HCT116 (cell line): ENCODE measurements at regions of chrX and their contacts with region 1.

Region 1: DNA sequence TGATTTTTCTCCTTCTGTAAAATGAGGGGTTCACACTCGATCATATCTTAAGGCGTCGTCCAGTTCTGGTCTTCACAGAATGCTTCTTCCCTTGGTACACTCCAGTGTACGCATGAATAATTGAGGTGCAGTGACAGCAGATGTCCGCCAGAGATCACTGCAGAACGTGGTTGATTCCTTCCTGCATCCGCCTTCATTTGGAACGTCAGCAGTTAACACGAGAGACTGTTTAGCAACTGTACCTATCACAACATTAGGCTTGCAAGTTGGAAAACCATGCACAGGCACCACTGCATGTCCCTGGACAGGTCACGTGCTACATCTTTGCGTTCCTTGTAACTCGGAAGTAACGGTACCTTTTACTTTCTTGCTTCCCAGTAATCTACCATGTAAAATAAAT is 66.0 kb upstream of the GEMIN8 start:
- DNase-seq: peak; percentile 57
- ATAC-seq: peak; percentile 97
- H3K4me3 ChIP-seq: no peak overlapping the region
- H3K27ac ChIP-seq: no peak overlapping the region
- H3K4me1 ChIP-seq: no peaks in the 10 kb centered on the region
- H3K27me3 ChIP-seq: no peaks in the 10 kb centered on the region
- CTCF ChIP-seq: peak; percentile 37 to 67 (median 60); a peak in 4 of 6 replicates
- POLR2A ChIP-seq: no peak
- RAD21 ChIP-seq: peak; percentile 82

Region 2: DNA sequence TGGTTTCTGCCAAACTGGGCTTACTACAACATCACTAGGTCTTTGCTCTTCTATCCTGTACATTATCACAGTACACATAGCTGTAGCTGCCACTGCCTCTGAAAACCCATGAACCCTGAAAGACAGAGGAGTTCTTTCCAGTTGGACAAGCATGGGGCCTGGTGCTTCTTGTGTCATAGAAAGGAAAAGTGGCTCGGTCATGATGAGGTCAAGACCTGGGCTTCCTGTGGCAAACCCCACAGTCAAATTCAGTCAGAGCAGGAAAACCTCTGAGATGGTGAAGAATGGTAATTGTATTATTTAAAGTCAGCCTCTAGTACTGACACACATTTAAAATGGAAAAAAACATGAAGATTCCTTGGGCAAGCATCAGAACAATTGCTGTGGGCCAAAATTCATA is 1437.8 kb before region 1 on chrX:
- CTCF ChIA-PET with region 1: no interaction called
- POLR2A ChIA-PET with region 1: no interaction called
- RAD21 ChIA-PET with region 1: no interaction called
- intact Hi-C with region 1: no loop called
- DNase-seq: no peak
- ATAC-seq: no peak
- H3K4me3 ChIP-seq: no peak overlapping the region
- H3K27ac ChIP-seq: no peak overlapping the region
- H3K4me1 ChIP-seq: no peaks in the 10 kb centered on the region
- H3K27me3 ChIP-seq: no peaks in the 10 kb centered on the region
- CTCF ChIP-seq: no peak
- POLR2A ChIP-seq: no peak
- RAD21 ChIP-seq: no peak

Region 3: DNA sequence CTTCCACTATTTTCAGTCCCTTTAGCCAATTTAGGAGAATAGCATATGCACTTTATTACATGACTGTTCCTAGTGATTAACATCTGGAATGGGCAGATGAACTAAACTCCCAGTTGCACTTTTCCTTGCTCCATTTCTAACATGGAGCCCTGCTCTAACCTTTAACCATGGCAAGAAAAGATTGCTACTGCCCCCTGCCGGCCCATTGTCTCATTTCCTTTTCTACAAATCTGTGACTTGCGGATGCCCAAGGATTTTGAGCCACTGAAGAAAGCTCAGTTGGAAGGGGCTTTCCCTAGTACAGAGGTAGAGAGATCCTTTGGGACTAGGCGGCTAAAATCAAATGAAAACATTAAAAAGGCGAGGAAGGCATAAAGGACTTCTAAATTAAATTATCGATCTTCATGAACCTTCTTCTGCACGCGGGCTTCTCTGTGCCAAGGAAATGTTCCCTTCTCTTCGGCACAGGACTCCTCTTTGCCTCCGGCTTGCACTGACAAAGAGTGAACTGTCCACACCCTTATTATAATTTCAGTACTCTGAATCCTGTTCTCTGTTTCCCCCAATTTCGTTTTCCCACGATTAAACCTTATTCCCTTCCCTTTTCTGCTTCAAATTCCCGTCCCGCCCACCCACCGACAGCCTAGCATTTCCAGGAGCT is 433.1 kb after region 1 on chrX:
- CTCF ChIA-PET with region 1: interaction called, 3 read pairs
- POLR2A ChIA-PET with region 1: no interaction called
- RAD21 ChIA-PET with region 1: no interaction called
- intact Hi-C with region 1: loop called (anchors 2 kb)
- DNase-seq: peak; percentile 13
- ATAC-seq: peak; percentile 52; the same call in 1 of the 2 replicates
- H3K4me3 ChIP-seq: no peak overlapping the region
- H3K27ac ChIP-seq: no peak overlapping the region
- H3K4me1 ChIP-seq: no peaks in the 10 kb centered on the region
- H3K27me3 ChIP-seq: no peaks in the 10 kb centered on the region
- CTCF ChIP-seq: peak; percentile 37 to 57 (median 38); a peak in 5 of 6 replicates
- POLR2A ChIP-seq: no peak
- RAD21 ChIP-seq: peak; percentile 62

Region 4: DNA sequence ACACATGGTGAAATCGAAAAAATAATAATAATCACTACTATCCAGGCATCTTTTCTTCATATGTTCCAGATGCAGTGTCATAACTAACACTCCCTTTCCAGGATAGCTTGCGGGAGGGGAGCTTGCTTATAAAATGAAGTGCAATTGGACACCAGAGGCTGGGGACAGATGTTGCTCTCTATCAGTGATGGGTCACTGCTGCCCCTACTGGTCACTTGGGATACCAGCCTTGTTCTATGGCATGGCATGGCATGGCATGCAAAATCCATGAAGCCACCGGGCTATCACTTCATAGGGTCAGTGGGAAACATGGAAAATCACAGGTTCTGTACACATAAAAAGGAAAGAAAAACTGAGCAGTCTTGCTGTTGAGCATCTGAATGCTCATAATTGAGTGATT is 601.7 kb after region 1 on chrX:
- CTCF ChIA-PET with region 1: no interaction called
- POLR2A ChIA-PET with region 1: no interaction called
- RAD21 ChIA-PET with region 1: no interaction called
- intact Hi-C with region 1: loop called (anchors 5 kb)
- DNase-seq: peak; percentile 34
- ATAC-seq: peak; percentile 98
- H3K4me3 ChIP-seq: no peak overlapping the region
- H3K27ac ChIP-seq: no peak overlapping the region
- H3K4me1 ChIP-seq: no peaks in the 10 kb centered on the region
- H3K27me3 ChIP-seq: no peaks in the 10 kb centered on the region
- CTCF ChIP-seq: peak; percentile 9 to 70 (median 67); a peak in 4 of 6 replicates
- POLR2A ChIP-seq: no peak
- RAD21 ChIP-seq: peak; percentile 59

Region 5: GRCh38 chrX:15143050-15143824 is 1047.5 kb after region 1 on chrX:
- CTCF ChIA-PET with region 1: no interaction called
- POLR2A ChIA-PET with region 1: no interaction called
- RAD21 ChIA-PET with region 1: no interaction called
- intact Hi-C with region 1: loop called (anchors 2 kb)
- DNase-seq: peak; percentile 34
- ATAC-seq: peak; percentile 91
- H3K4me3 ChIP-seq: no peak overlapping the region
- H3K27ac ChIP-seq: no peak overlapping the region
- H3K4me1 ChIP-seq: no peaks in the 10 kb centered on the region
- H3K27me3 ChIP-seq: no peaks in the 10 kb centered on the region
- CTCF ChIP-seq: peak; percentile 52 to 65 (median 63); a peak in 5 of 6 replicates
- POLR2A ChIP-seq: no peak
- RAD21 ChIP-seq: peak; percentile 69